ENCODE measurements at regions of chr3 and their contacts with region 1.

Region 1: GRCh38 chr3:51371943-51372557 is 13.0 kb upstream of the MANF start:
- H3K4me3 Mint-ChIP-seq: no peak overlapping the region
- H3K27ac Mint-ChIP-seq: no peak overlapping the region
- H3K4me1 Mint-ChIP-seq: no peaks in the 10 kb centered on the region
- H3K27me3 Mint-ChIP-seq: peaks cover 3% of the 10 kb centered on the region

Region 2: GRCh38 chr3:50971487-50971924 is 400.5 kb before region 1 on chr3:
- intact Hi-C with region 1: loop called (anchors 2 kb)
- H3K4me3 Mint-ChIP-seq: no peak overlapping the region
- H3K27ac Mint-ChIP-seq: no peak overlapping the region
- H3K4me1 Mint-ChIP-seq: no peaks in the 10 kb centered on the region
- H3K27me3 Mint-ChIP-seq: no peaks in the 10 kb centered on the region

Region 3: GRCh38 chr3:51099794-51100535 is 272.1 kb before region 1 on chr3:
- intact Hi-C with region 1: loop called (anchors 2 kb)
- H3K4me3 Mint-ChIP-seq: no peak overlapping the region
- H3K27ac Mint-ChIP-seq: no peak overlapping the region
- H3K4me1 Mint-ChIP-seq: no peaks in the 10 kb centered on the region
- H3K27me3 Mint-ChIP-seq: peaks cover 2% of the 10 kb centered on the region

Region 4: DNA sequence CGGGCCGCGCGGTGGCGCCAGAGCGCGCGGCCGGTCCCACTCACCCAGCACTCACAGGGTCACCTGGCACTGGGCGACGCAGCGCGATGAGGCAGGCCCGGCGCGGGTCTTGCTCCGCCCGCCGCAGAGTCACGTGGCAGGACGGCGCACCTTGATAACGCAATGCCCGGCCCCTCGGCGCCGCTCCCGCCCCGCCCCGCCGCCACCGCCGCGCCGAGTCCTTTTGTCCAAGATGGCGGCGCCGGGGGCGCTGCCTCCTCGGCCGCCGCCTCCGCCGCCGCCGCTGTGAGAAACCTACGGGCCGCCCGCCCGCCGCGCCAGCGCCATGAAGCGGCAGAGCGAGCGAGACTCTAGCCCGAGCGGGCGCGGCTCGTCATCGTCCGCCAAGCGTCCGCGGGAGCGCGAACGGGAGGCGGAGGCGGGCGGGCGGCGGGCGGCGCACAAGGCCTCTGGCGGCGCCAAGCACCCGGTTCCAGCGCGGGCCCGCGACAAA is 19.1 kb after region 1 on chr3 and contains the start of gene RBM15B:
- intact Hi-C with region 1: no loop called
- H3K4me3 Mint-ChIP-seq: peak within 1 kb of the TSS; percentile 81
- H3K27ac Mint-ChIP-seq: peak within 1 kb of the TSS; percentile 81
- H3K4me1 Mint-ChIP-seq: peaks cover 88% of the 10 kb centered on the region
- H3K27me3 Mint-ChIP-seq: no peaks in the 10 kb centered on the region

Region 5: DNA sequence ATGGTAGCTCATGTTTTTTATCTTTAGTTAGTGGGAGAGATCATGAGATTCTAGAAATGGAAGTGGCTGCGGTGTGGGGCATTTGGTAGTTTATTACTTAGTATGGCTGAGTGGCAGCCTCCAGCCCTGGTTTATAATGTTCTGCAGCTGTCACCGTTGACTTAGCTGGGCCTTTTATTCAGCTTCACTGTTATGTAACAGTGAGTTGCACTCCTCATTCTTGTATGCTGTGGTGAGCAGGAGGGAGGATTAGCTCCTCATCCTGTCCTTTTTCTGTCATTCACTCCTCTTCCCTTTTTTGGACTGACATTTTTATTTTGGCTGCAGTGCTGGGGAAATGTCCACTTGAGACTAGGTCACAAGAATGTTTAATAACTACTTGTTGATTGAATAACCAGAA is 196.0 kb after region 1 on chr3:
- intact Hi-C with region 1: no loop called
- H3K4me3 Mint-ChIP-seq: no peak overlapping the region
- H3K27ac Mint-ChIP-seq: no peak overlapping the region
- H3K4me1 Mint-ChIP-seq: peaks cover 26% of the 10 kb centered on the region
- H3K27me3 Mint-ChIP-seq: no peaks in the 10 kb centered on the region

Measured in dendritic cell treated with granulocyte-macrophage colony-stimulating factor and Interleukin-4, amounts not matched to agents 40 ng/mL and 50 ng/mL, for 4 days (primary cell).